Tibial artery (tissue), 4 donors: ENCODE measurements at regions of chr2 and their contacts with region 1.

Region 1: GRCh38 chr2:197453161-197453914 is at the start of gene COQ10B:
- DNase-seq: peak; percentile 99 to 100
- H3K4me3 ChIP-seq: peak within 1 kb of the TSS; percentile 87 to 96
- H3K27ac ChIP-seq: peak within 1 kb of the TSS; percentile 99 to 100
- H3K4me1 ChIP-seq: peaks cover 0 to 38% (median 18%) of the 10 kb centered on the region in 4 donors
- H3K27me3 ChIP-seq: no peaks in the 10 kb centered on the region
- CTCF ChIP-seq: peak in 1 of 2 experiments; percentile 22

Region 2: GRCh38 chr2:197434541-197435513 is 18.5 kb before region 1 on chr2 and contains the start of gene SF3B1:
- intact Hi-C with region 1: loop called (anchors 1 kb)
- DNase-seq: peak; percentile 98 to 99
- H3K4me3 ChIP-seq: peak within 1 kb of the TSS; percentile 98 to 99
- H3K27ac ChIP-seq: peak within 1 kb of the TSS; percentile 98
- H3K4me1 ChIP-seq: peaks cover 0 to 52% (median 38%) of the 10 kb centered on the region in 4 donors
- H3K27me3 ChIP-seq: no peaks in the 10 kb centered on the region
- CTCF ChIP-seq: no peak

Region 3: DNA sequence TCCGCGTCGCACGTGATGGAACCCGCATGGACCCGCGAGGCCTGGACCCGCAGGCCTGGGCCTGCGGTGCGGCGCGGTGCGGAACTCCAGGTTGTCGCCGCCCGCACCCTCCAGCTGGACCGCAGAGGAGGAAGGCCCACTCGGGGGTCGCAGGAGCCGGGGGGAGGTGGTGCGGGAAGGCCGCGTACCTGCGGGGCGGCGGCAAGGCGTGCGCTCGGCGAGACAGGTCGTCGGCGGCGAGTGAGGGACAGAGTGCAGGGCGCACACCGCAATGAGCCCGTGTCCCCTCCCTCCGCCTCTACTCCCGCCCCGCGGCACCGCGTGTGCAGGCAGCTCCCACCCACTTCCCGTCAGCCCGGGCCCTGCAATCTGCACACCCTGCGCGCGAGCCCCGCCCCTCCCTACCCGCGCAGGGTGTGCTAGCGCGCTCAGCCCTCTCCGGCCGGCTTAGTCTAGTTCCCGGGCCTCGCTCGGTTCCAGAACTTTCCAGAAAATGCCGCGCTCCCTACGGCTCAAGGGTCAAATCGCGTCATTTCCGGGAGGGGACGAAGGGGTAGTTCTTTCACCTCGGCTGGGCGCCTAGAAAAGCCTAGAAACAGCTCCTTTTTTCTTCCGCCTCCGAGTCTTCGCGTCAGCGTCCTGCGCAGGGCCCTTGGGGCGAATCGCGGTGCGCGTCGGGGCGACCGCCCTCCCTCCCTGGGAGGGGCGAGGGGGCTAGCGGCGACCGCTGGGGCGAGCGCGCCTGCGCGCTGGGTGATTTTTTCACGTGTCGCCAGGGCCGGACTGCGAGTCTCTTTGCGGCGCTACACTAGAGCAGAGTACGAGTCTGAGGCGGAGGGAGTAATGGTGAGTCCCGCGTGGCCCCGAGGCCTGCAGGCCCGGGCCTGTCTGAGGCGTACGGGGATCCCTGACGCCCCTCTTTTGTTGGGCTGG is 46.5 kb after region 1 on chr2 and contains the starts of genes HSPD1 and HSPE1:
- intact Hi-C with region 1: loop called (anchors 2 kb)
- DNase-seq: peak; percentile 98 to 99
- H3K4me3 ChIP-seq: peak within 1 kb of the TSS; percentile 81 to 91
- H3K27ac ChIP-seq: peak within 1 kb of the TSS; percentile 95 to 97
- H3K4me1 ChIP-seq: peaks cover 0 to 55% (median 36%) of the 10 kb centered on the region in 4 donors
- H3K27me3 ChIP-seq: no peaks in the 10 kb centered on the region
- CTCF ChIP-seq: peak in 1 of 2 experiments; percentile 11